ENCODE measurements at regions of chr3 and their contacts with region 1.

Region 1: GRCh38 chr3:37855363-37855970 is 6.2 kb upstream of the CTDSPL start:
- DNase-seq: peak; percentile 65
- H3K4me3 Mint-ChIP-seq: no peak overlapping the region
- H3K27ac Mint-ChIP-seq: no peak overlapping the region
- H3K4me1 Mint-ChIP-seq: no peaks in the 10 kb centered on the region
- H3K27me3 Mint-ChIP-seq: peaks cover 7% of the 10 kb centered on the region

Region 2: DNA sequence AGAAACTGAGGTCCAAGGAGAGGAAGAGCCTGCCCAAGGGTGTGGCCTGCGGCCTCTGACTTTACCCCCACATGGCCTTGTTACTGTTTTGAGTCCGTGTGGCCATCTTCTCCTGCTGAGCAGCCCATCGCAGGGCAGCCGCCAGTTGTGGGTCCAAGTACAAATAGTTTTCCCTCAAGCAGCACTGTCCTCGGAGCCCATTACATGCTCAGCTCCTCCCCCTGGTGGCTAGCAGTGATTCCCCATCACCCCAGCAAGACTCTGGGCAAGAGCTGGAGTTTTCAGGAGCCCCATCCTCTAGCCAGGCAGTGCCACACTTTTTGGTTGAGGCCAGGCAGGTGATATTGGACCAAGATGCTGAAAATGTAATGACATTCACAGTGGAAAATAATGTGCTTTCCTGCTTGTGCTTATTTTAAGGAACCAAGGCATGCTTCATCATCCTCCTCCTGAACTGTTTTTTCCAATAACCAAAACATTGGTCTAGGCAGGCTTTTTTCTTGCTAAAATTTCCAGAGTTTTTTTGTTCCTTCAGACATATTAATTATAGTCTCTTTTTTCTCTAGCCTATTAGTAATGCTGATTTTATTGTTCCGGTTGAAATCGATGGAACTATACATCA is 111.9 kb after region 1 on chr3:
- intact Hi-C with region 1: loop called (anchors 1 kb)
- DNase-seq: peak; percentile 40
- H3K4me3 Mint-ChIP-seq: no peak overlapping the region
- H3K27ac Mint-ChIP-seq: no peak overlapping the region
- H3K4me1 Mint-ChIP-seq: no peaks in the 10 kb centered on the region
- H3K27me3 Mint-ChIP-seq: peaks cover 3% of the 10 kb centered on the region

Region 3: DNA sequence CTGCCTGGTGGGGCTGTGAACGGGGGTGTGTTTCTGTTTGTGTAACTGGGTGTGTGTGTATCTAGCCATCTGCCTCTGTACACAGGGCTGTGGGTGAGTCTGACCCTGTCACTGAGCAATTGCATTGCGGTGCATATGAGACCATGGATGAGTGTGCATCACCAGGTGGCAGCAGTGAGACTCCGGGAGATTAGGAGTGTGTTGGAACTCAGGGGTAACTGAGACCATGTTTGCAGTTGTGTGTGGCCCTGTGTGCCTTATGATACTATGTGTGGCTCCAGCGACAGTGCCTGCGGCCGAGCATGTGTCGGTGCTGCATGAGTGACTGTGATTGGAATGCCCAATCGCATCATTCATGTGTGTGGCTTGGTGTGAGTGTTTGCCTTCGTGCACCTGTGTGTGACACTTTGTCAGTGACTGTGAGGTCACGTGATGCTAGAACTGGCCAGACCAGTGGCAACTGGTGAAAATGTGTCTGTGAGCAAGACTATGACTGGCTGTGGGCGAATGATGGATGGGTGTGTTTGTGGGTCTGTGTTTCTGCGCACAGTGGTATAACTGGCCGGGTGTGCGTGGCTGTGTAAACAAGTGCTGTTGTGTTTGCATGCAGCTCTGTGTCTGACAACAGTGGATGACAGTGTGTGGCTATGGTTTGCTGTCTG is 149.1 kb after region 1 on chr3:
- intact Hi-C with region 1: no loop called
- DNase-seq: peak; percentile 31
- H3K4me3 Mint-ChIP-seq: no peak overlapping the region
- H3K27ac Mint-ChIP-seq: no peak overlapping the region
- H3K4me1 Mint-ChIP-seq: peaks cover 23% of the 10 kb centered on the region
- H3K27me3 Mint-ChIP-seq: no peaks in the 10 kb centered on the region

Region 4: GRCh38 chr3:38479431-38480092 is 624.1 kb after region 1 on chr3:
- intact Hi-C with region 1: loop called (anchors 5 kb)
- DNase-seq: peak; percentile 21
- H3K4me3 Mint-ChIP-seq: no peak overlapping the region
- H3K27ac Mint-ChIP-seq: no peak overlapping the region
- H3K4me1 Mint-ChIP-seq: no peaks in the 10 kb centered on the region
- H3K27me3 Mint-ChIP-seq: no peaks in the 10 kb centered on the region